MCF 10A (cell line): ENCODE measurements at regions of chr9 and their contacts with region 1.

Region 1: DNA sequence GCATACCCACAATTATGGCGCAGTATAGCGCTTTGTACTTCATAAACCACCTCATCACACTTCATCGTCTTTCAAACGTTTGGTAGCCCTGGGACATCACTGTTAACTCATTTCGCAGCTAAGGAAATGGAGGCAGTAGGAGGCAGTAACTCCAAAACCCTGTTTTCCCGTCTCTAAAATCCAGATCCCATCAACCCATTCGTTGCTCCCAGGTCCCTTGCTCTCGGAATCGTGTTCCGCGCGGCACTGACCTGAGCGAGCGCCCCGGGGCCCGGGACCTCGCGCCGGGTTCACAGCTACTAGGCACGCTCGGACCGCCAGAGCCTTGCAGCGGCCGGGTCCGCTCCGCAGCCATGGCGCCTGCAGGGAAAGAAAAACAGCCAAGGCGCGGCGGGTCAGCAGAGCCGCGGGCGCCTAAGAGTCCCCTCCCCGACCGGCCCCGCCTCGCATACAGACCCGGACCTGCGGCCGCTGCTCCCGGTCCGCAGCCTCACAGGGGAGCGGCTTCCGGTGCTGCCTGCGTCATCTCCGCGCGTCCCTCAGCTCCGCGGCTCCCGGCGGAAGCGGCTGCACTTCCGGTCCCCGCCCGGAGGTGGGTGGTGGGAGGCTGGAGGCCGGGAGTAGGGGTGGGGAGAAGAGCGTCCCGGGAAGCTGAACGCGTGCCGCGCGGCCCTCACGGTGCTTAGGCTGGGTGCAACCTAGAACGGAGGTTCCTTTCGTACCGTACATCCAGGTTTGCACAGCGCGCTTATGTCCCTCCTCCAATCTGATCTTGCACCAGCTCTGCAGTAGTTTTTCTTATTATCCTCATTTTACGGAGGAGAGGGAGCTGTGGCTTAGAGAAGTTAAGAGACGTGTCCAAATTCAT is at the start of gene FBXW2:
- DNase-seq: peak; percentile 88
- H3K4me3 Mint-ChIP-seq: peak within 1 kb of the TSS; percentile 89
- H3K27ac Mint-ChIP-seq: peak within 1 kb of the TSS; percentile 97
- H3K4me1 Mint-ChIP-seq: peaks cover 10% of the 10 kb centered on the region
- H3K27me3 Mint-ChIP-seq: no peaks in the 10 kb centered on the region
- CTCF ChIP-seq: no peak
- total RNA-seq, gene FBXW2: 53.9 and 58.4 TPM in 2 replicates

Region 2: GRCh38 chr9:120562861-120563443 is 230.2 kb before region 1 on chr9:
- CTCF ChIA-PET with region 1: no interaction called
- POLR2A ChIA-PET with region 1: no interaction called
- intact Hi-C with region 1: no loop called
- DNase-seq: no peak
- H3K4me3 Mint-ChIP-seq: no peak overlapping the region
- H3K27ac Mint-ChIP-seq: no peak overlapping the region
- H3K4me1 Mint-ChIP-seq: peaks cover 8% of the 10 kb centered on the region
- H3K27me3 Mint-ChIP-seq: no peaks in the 10 kb centered on the region
- CTCF ChIP-seq: no peak

Region 3: DNA sequence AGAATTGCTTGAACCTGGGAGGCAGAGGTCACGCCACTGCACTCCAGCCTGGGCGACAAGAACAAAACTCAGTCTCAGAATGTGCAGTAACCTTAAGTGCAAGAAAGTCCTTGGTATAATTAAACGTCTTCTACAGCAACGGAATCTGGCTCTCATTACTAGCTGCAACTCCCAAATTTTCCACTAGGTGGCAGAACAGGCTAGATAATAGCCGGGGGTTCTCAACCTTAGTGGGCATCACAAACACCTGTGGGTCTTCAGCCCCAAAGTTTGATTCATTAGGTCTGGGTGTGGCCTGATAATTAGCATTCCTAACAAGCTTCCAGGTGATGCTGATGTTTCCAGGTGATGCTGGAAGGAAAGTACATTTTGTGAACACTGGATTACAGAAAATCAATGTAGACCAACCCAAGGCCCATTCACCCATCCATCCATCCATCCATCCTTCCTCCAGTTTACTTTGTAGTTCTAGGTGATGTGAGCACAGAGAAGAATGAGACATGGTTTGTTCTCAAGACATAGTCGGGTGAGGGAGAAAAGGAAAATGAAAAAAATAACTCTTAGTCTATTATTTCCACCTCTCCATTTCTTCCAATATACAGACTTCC is 37.2 kb before region 1 on chr9:
- CTCF ChIA-PET with region 1: interaction called, 9 read pairs
- POLR2A ChIA-PET with region 1: interaction called, 30 read pairs
- intact Hi-C with region 1: no loop called
- DNase-seq: peak; percentile 71
- H3K4me3 Mint-ChIP-seq: no peak overlapping the region
- H3K27ac Mint-ChIP-seq: no peak overlapping the region
- H3K4me1 Mint-ChIP-seq: peaks cover 5% of the 10 kb centered on the region
- H3K27me3 Mint-ChIP-seq: no peaks in the 10 kb centered on the region
- CTCF ChIP-seq: peak; percentile 79

Region 4: GRCh38 chr9:120774722-120775121 is 18.4 kb before region 1 on chr9:
- CTCF ChIA-PET with region 1: interaction called, 4 read pairs
- POLR2A ChIA-PET with region 1: interaction called, 103 read pairs
- intact Hi-C with region 1: no loop called
- DNase-seq: no peak
- H3K4me3 Mint-ChIP-seq: no peak overlapping the region
- H3K27ac Mint-ChIP-seq: no peak overlapping the region
- H3K4me1 Mint-ChIP-seq: peaks cover 22% of the 10 kb centered on the region
- H3K27me3 Mint-ChIP-seq: no peaks in the 10 kb centered on the region
- CTCF ChIP-seq: no peak

Region 5: DNA sequence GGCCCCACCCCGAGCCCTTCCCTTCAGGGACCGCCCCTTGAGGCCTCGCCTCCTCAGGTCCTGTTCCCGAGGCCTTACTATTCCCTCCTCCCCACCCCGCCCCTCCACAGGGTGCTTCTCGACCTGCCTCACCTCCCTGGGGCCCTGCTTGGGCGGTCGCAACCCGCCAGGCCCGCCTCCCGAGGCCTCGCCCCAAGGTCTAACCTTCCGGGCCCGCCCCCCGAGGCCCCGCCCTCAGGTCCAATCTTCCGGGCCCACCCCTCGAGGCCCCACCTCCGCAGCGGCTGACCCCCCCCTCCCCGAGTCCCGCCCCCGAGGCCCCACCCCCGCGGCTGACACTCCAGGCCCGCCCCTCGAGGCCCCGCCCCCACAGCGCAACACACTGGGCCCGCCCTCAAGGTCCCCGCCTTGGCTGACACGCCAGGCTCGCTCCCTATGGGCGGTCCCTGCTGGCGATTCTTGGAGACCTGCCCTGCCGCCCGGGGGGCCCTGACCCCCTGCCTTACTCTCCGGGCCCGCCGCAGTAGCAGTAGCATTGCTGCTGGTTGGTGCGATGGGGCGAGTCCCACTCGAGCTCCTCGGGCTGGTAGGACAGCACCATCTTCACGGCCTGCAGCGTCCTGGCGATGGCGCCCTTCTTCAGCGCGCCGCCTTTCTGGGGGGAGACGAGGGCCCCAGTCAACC is 75.7 kb after region 1 on chr9:
- CTCF ChIA-PET with region 1: no interaction called
- POLR2A ChIA-PET with region 1: interaction called, 12 read pairs
- intact Hi-C with region 1: no loop called
- DNase-seq: peak; percentile 99
- H3K4me3 Mint-ChIP-seq: peak overlapping the region; percentile 72
- H3K27ac Mint-ChIP-seq: peak overlapping the region; percentile 35
- H3K4me1 Mint-ChIP-seq: peaks cover 19% of the 10 kb centered on the region
- H3K27me3 Mint-ChIP-seq: no peaks in the 10 kb centered on the region
- CTCF ChIP-seq: no peak

Region 6: GRCh38 chr9:120936011-120936763 is 143.1 kb after region 1 on chr9:
- CTCF ChIA-PET with region 1: interaction called, 5 read pairs
- POLR2A ChIA-PET with region 1: interaction called, 30 read pairs
- intact Hi-C with region 1: loop called (anchors 1 kb)
- DNase-seq: peak; percentile 96
- H3K4me3 Mint-ChIP-seq: peak overlapping the region; percentile 67
- H3K27ac Mint-ChIP-seq: peak overlapping the region; percentile 81
- H3K4me1 Mint-ChIP-seq: peaks cover 39% of the 10 kb centered on the region
- H3K27me3 Mint-ChIP-seq: no peaks in the 10 kb centered on the region
- CTCF ChIP-seq: peak; percentile 73